ENCODE measurements at regions of chr11 and their contacts with region 1.

Region 1: GRCh38 chr11:16613512-16614381 is 124.7 kb upstream of the C11orf58 start:
- DNase-seq: peak; percentile 68 to 86 (median 82)
- H3K4me3 ChIP-seq: peak overlapping the region; percentile 15
- H3K27ac ChIP-seq: no peak overlapping the region
- H3K4me1 ChIP-seq: peaks cover 4% of the 10 kb centered on the region
- H3K27me3 ChIP-seq: no peaks in the 10 kb centered on the region
- CTCF ChIP-seq: peak; percentile 54 to 69 (median 66)
- EP300 ChIP-seq: no peak
- POLR2A ChIP-seq: no peak

Region 2: GRCh38 chr11:15327786-15328231 is 1285.9 kb before region 1 on chr11:
- intact Hi-C with region 1: loop called in 2 of 4 experiments (anchors 5 to 10 kb)
- DNase-seq: peak in 4 of 5 donors; percentile 24 to 59 (median 35)
- H3K4me3 ChIP-seq: no peak overlapping the region
- H3K27ac ChIP-seq: no peak overlapping the region
- H3K4me1 ChIP-seq: no peaks in the 10 kb centered on the region
- H3K27me3 ChIP-seq: no peaks in the 10 kb centered on the region
- CTCF ChIP-seq: no peak
- EP300 ChIP-seq: no peak
- POLR2A ChIP-seq: no peak

Region 3: GRCh38 chr11:15333407-15333806 is 1280.3 kb before region 1 on chr11:
- intact Hi-C with region 1: loop called in 2 of 4 experiments (anchors 5 to 10 kb)
- DNase-seq: no peak
- H3K4me3 ChIP-seq: no peak overlapping the region
- H3K27ac ChIP-seq: no peak overlapping the region
- H3K4me1 ChIP-seq: no peaks in the 10 kb centered on the region
- H3K27me3 ChIP-seq: no peaks in the 10 kb centered on the region
- CTCF ChIP-seq: no peak
- EP300 ChIP-seq: no peak
- POLR2A ChIP-seq: no peak

Measured in ovary (tissue), 10 donors.